Activated CD8-positive, alpha-beta T cell treated with anti-CD3 and anti-CD28 coated beads for 36 hours (primary cell): ENCODE measurements at regions of chr12 and their contacts with region 1.

Region 1: GRCh38 chr12:48197971-48198671 is 5.0 kb downstream of the OR10AD1 start:
- DNase-seq: peak; percentile 98
- ATAC-seq: peak; percentile 98
- H3K4me3 Mint-ChIP-seq: peak overlapping the region; percentile 84
- H3K27ac Mint-ChIP-seq: peak overlapping the region; percentile 98
- H3K4me1 Mint-ChIP-seq: peaks cover 19% of the 10 kb centered on the region
- H3K27me3 Mint-ChIP-seq: peaks cover 3% of the 10 kb centered on the region
- CTCF ChIP-seq: no peak

Region 2: DNA sequence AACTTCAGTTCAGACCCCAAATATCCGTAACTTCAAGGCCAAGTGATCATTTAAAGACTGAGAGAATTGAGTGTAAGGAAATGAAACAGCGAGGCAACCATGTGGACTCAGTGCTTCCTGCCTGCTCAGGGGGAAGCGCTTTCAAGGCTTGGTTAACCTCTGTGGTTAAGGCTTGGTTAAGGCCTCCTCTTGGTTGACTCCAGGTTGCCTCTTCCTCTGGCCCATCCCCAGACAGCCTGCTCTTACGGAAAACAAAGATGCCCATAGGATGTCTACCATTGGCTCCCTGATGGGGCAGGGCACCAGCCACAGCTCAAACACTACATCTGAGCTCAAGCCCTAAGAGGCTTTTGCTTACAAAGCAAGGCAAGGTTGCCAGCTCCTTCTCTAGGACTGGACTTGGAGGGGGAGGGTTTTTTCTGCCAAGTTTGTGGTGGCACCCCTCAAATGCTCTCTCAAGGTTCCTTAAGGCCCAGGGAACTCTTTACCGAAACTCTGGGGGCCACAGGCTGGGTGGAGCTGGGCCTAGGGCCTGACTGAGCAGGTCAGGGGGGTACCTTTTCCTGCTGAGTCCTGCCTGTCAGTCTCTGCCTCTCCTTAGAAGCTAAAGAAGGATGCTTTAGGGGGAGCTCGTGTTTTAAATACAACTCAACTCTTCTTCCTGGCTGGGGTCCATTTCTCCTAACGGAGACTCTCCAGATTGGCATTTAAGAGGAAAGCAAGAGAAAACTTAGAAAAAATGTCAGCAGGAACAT is 207.6 kb before region 1 on chr12:
- CTCF ChIA-PET with region 1: no interaction called
- POLR2A ChIA-PET with region 1: no interaction called
- intact Hi-C with region 1: no loop called
- DNase-seq: peak; percentile 80
- ATAC-seq: peak; percentile 90
- H3K4me3 Mint-ChIP-seq: no peak overlapping the region
- H3K27ac Mint-ChIP-seq: peak overlapping the region; percentile 75
- H3K4me1 Mint-ChIP-seq: peaks cover 22% of the 10 kb centered on the region
- H3K27me3 Mint-ChIP-seq: peaks cover 22% of the 10 kb centered on the region
- CTCF ChIP-seq: no peak

Region 3: DNA sequence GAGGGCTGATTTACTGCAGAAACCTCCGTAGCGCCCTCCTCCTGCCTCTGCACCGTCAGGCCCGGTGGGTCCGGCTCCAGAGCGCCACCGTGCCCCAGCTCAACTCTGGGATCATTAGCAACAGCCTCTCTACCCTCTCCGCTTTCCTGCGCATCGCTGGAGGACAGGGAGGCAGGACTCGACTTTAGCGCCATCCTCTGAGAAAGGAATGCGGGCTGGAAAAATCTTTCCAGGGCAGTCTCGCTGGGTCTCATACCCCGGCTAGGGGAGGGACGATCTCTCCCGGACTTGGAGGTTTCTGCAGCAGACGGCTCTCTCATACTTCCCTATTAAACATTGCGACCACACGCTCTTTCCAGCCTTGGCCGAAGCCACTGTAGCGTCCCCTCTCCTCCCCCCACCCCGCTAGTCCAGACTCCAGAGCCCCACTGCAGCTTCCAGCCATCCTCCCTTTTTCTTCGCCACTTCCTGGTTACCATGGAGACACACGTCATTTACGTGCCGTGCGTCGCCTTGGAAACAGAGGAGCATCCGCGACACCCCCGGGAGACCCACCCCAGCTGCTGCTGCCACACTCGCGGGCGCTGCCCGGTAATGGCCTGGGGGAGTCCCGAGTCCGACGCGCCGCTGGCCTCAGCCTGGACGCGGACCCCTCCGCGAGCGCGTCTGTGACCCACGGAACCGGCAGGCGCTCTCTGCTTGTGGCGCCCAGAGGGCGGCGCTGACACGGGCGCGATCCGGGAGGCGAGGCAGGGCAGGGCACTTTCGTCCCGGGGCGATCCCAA is 14.8 kb before region 1 on chr12 and contains the start of gene CCDC184:
- CTCF ChIA-PET with region 1: interaction called, 38 read pairs
- POLR2A ChIA-PET with region 1: interaction called, 4 read pairs
- intact Hi-C with region 1: no loop called
- DNase-seq: peak; percentile 77
- ATAC-seq: peak; percentile 70
- H3K4me3 Mint-ChIP-seq: peak within 1 kb of the TSS; percentile 83
- H3K27ac Mint-ChIP-seq: no peak within 1 kb of the TSS
- H3K4me1 Mint-ChIP-seq: peaks cover 16% of the 10 kb centered on the region
- H3K27me3 Mint-ChIP-seq: peaks cover 28% of the 10 kb centered on the region
- CTCF ChIP-seq: peak; percentile 44
- total RNA-seq, gene CCDC184: 0.25 to 0.34 TPM